Dorsolateral prefrontal cortex (tissue), 120 donors: ENCODE measurements at regions of chr4 and their contacts with region 1.

Region 1: GRCh38 chr4:164383358-164384220 is 370.3 kb upstream of the SMIM31 start:
- DNase-seq: peak; percentile 42 to 94 (median 92)
- H3K4me3 ChIP-seq: peak overlapping the region; percentile 42 to 87 (median 71)
- H3K27ac ChIP-seq: peak overlapping the region; percentile 65 to 99 (median 96)
- H3K27me3 ChIP-seq: peaks cover 0 to 9% (median 0%) of the 10 kb centered on the region in 45 donors
- CTCF ChIP-seq: peak in 55 of 56 donors; percentile 6 to 73 (median 59)

Region 2: DNA sequence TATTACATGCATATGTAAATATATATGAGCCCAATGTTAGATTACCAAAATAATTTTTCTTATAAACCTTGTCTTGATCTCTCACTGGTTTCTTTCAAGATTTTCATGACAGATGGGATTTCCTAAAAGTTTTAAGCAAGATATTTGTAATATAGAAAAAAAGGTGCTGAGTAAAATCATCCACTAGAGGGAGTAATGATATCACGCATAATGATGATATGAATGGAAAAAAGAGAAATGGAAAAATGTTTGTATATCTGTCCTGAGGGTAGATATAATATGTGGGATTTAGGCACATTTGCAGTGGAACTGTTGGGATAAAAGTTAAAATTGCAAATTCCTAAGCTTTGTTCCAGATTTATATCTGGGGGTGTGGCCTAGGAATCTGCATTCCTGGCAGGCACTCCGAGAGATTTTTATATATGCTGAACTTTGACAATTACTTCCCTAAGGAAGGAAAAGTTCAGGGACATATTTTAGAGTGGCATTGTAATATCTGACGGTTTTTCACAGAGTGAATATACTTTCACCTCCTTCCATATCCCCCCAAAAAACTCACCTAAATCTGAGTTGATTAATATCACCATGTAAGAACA is 828.6 kb before region 1 on chr4:
- intact Hi-C with region 1: loop called (anchors 5 kb)
- DNase-seq: no peak
- H3K4me3 ChIP-seq: no peak overlapping the region
- H3K27ac ChIP-seq: peak overlapping the region in 7 of 59 donors; percentile 2 to 54 (median 11)
- H3K27me3 ChIP-seq: no peaks in the 10 kb centered on the region
- CTCF ChIP-seq: peak; percentile 62 to 98 (median 81)

Region 3: DNA sequence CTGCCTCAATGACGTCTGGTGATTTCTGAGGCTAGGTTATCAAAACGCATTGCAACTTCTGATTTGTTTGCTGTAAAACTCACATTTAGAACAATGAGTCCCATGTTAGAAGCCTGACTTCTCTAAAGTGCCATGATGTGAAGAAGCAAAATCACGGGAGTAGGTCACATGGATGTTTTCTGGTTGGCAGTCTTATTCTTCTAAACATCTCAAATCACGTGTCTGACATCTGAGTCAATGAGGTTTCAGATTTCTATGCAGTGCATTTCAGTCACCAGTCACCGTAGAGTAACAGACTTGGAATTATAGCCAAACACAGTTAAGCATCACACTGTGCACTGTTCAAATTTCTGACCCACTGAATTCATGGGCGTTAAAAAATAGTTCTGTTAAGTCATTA is 407.0 kb before region 1 on chr4:
- intact Hi-C with region 1: no loop called
- DNase-seq: no peak
- H3K4me3 ChIP-seq: no peak overlapping the region
- H3K27ac ChIP-seq: peak overlapping the region in 1 of 59 donors; percentile 23
- H3K27me3 ChIP-seq: no peaks in the 10 kb centered on the region
- CTCF ChIP-seq: no peak

Region 4: DNA sequence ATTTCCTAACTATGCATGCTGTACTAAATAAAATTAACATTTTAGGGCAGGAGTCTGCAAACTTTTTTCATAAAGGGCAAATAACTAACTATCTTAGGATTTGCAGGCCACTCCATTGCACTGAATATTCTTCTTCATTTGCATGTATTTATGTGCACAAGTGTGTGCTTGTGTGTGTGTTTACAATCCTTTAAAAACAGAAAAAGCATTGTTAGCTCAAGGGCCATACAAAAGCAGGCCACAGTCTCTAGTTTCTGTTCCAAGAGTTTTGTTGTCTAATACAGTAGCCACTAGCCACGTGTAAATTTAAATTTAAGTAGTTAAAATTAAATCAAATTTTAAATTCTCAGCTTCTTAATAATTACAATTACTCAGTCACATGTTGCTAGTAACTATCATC is 267.3 kb before region 1 on chr4:
- intact Hi-C with region 1: loop called (anchors 1 to 10 kb)
- DNase-seq: no peak
- H3K4me3 ChIP-seq: peak overlapping the region in 6 of 59 donors; percentile 4 to 25 (median 13)
- H3K27ac ChIP-seq: peak overlapping the region in 56 of 59 donors; percentile 18 to 94 (median 80)
- H3K27me3 ChIP-seq: no peaks in the 10 kb centered on the region
- CTCF ChIP-seq: peak in 6 of 56 donors; percentile 8 to 22 (median 17)

Region 5: DNA sequence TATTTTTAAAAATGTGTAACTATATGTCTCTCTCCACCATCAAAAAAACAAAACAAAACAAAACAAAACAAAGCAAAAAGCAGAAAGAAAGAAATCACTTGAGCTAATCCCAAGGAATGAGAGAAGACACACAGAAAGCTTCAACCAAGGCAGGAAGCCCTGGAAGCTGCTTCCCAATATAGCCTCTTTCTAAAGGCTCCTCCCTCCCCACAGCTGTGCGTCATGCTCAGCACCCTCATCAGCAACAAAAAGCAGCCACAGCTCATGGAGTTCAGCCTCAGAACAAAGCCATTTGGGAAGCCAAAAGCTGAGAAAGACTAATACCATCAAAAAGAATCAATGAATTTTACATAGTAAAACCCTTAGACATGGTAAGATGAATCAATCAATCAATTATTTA is 131.3 kb before region 1 on chr4:
- intact Hi-C with region 1: loop called (anchors 5 to 10 kb)
- DNase-seq: peak in 9 of 10 donors; percentile 37 to 80 (median 71)
- H3K4me3 ChIP-seq: peak overlapping the region in 7 of 59 donors; percentile 2 to 28 (median 27)
- H3K27ac ChIP-seq: peak overlapping the region in 54 of 59 donors; percentile 1 to 87 (median 70)
- H3K27me3 ChIP-seq: no peaks in the 10 kb centered on the region
- CTCF ChIP-seq: peak in 4 of 56 donors; percentile 9 to 18 (median 14)

Region 6: DNA sequence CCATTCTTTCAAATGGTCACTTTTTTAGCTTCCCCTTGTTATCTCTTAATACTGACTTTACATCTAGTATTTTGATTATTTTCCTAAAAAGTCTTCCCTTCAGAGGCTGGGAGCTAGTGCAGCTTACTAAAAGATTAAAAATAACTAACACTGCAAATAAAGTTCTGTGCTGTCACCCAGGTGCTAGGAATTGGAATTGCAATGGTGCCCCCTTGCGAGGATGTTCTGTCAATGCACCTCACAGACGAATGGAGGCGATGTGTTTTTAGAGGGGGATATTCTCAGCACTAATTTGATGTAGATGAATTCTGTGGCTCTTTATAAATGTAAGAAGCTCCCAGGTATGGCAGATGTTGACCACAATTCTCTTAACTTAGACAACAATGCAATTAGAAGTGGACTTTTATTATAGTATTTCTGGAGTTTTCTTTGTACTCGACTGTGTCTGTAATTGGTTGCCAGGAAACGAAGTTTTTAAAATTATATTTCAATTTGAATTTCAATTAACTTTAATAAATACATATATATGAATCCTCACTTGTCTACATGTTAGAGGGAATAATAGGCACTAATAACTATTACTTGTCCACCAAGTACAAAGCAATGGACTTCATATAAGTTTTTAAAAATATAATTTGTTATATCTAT is 348.4 kb after region 1 on chr4:
- intact Hi-C with region 1: loop called in 1 of 2 experiments (anchors 10 kb)
- DNase-seq: peak in 9 of 10 donors; percentile 12 to 72 (median 54)
- H3K4me3 ChIP-seq: peak overlapping the region in 1 of 59 donors; percentile 3
- H3K27ac ChIP-seq: no peak overlapping the region
- H3K27me3 ChIP-seq: no peaks in the 10 kb centered on the region
- CTCF ChIP-seq: peak; percentile 75 to 97 (median 92)